ENCODE measurements at regions of chr14 and their contacts with region 1.

Region 1: DNA sequence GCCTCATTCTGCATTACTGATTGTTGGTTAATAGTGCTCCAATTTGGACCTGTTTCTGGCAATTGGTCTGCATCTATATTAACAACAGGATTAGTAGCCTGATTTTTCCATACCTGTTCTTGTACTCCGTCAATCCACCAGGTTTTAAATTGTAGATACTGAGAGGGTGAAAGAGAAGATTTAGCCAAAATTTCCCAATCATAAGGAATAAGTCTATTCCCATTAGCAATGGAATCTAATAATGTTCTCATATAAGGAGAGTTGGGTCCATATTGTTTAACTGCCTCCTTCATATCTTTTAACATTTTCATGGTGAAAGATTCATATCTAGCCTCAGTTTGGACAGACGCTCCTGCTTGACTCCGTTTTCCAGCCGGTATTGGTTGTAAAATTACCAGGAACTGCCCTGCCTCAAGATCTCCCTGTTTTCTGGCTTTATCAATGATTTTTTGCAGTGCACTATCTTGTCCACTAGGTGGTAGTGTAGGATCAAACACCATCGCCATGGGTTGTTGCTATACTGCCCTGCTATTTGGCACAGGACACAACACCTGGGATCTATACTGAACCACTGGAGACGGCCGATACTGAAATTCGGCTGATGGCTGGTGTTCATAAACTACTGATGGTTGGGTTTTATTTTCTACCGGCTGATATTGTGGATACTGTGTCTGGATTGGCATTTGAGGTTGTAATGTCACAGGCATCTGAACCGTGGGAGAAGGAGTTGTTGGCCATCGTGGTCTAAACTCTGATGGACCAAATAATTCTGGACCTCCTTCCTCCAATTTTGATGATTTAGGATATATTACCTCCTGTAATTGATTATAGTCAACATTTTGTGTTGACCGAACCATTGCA is 25.2 kb downstream of the DHRS4L2 start:
- DNase-seq: no peak
- ATAC-seq: peak; percentile 89

Region 2: DNA sequence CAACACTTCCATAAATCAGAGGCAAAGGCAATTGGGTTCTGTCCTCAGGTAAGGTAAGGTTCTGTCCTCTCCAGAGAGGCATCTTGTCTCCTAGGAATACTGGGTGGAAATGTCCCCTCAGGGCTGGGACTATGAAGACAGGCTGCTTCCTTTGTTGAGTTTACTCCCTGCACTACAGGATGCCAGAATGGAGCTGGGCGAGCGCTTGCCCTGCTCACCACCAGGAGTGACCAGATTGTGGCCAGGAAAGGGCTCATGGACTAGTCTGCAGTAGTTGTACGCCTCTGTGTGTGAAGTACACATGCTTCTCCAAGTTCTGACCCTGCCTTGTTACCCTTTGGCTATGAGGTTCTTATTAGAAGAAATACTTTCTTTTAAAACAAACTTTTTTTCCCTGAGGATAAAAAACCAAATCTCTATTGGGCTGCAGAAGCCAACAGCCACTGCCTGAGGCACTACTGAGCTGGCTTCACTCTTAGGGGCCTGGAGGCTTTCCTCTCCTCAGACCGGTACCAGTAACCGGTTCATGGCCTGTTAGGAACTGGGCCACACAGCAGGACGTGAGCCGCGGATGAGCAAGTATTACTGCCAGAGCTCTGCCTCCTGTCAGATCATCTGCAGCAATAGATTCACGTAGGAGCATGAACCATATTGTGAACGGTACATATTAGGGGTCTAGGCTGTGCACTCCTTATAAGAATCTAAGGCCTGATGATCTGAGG is 294.5 kb before region 1 on chr14:
- intact Hi-C with region 1: no loop called
- DNase-seq: no peak
- ATAC-seq: no peak

Region 3: GRCh38 chr14:24093901-24094761 is 80.2 kb after region 1 on chr14 and contains the start of gene PCK2:
- intact Hi-C with region 1: loop called (anchors 2 kb)
- DNase-seq: peak; percentile 95
- ATAC-seq: peak; percentile 91
- total RNA-seq, gene PCK2: 2.7 TPM

Measured in Right ventricle myocardium superior (tissue), 1 donor.